Activated CD8-positive, alpha-beta memory T cell treated with anti-CD3 and anti-CD28 coated beads, Interleukin-2, amount 10 ng/mL, durations not matched to agents 7 days and 5 days (primary cell): ENCODE measurements at regions of chr20 and their contacts with region 1.

Region 1: DNA sequence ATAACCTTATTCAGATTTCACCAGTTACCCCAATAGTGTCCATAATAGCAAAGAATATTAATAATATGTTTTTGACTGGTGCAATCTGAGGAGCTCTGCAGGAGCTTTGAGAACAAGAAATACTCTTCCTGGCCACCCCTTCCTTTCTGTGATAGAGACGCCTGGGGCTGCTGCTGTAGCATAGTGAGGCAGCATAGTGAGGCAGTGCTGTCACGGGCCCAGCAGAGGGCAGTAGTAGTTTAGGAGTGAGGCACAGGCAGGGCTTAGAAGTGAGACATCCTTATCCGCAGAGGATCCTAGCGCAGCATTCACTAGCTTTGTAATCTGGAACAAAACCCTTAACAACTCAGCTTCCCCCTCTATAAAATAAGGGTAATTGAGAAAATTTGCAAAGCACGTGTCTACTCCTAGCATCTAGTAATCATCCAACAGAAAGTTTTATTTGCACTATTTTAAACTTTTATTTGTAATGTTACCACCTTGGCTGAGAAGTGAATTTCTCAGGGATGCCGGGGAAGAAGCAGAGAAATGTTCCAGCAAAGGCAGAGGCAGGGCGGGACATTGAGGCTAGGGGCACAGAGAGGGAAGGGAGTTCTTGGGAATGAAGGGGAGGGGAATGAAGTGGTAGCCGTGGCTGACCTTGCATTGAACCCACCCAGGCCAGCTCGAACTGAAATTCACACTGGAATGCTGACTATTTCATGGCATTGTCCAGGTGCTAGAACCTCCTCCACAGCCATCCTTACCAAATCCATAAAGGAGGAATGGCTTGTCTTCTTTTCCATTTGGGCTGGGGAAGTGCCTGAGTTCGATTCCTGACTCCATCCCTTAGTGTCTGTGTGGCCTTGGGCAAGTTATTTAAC is 78.8 kb downstream of the CDS2 start:
- DNase-seq: peak; percentile 81
- ATAC-seq: peak; percentile 97
- H3K4me3 Mint-ChIP-seq: no peak overlapping the region
- H3K27ac Mint-ChIP-seq: no peak overlapping the region
- H3K4me1 Mint-ChIP-seq: no peaks in the 10 kb centered on the region
- H3K27me3 Mint-ChIP-seq: no peaks in the 10 kb centered on the region

Region 2: GRCh38 chr20:5126512-5127203 is 78.9 kb before region 1 on chr20 and contains the start of gene CDS2:
- CTCF ChIA-PET with region 1: interaction called, 12 read pairs
- DNase-seq: peak; percentile 100
- ATAC-seq: peak; percentile 90
- H3K4me3 Mint-ChIP-seq: peak within 1 kb of the TSS; percentile 97
- H3K27ac Mint-ChIP-seq: peak within 1 kb of the TSS; percentile 96
- H3K4me1 Mint-ChIP-seq: peaks cover 54% of the 10 kb centered on the region
- H3K27me3 Mint-ChIP-seq: no peaks in the 10 kb centered on the region
- total RNA-seq, gene CDS2: 62.2 to 63.5 TPM

Region 3: GRCh38 chr20:5191829-5192569 is 13.6 kb before region 1 on chr20:
- CTCF ChIA-PET with region 1: interaction called, 20 read pairs
- DNase-seq: peak; percentile 55
- ATAC-seq: peak; percentile 75
- H3K4me3 Mint-ChIP-seq: no peak overlapping the region
- H3K27ac Mint-ChIP-seq: peak overlapping the region; percentile 64
- H3K4me1 Mint-ChIP-seq: peaks cover 20% of the 10 kb centered on the region
- H3K27me3 Mint-ChIP-seq: no peaks in the 10 kb centered on the region

Region 4: GRCh38 chr20:5215672-5216304 is 10.2 kb after region 1 on chr20:
- CTCF ChIA-PET with region 1: interaction called, 10 read pairs
- DNase-seq: no peak
- ATAC-seq: no peak
- H3K4me3 Mint-ChIP-seq: no peak overlapping the region
- H3K27ac Mint-ChIP-seq: no peak overlapping the region
- H3K4me1 Mint-ChIP-seq: no peaks in the 10 kb centered on the region
- H3K27me3 Mint-ChIP-seq: no peaks in the 10 kb centered on the region

Region 5: GRCh38 chr20:5222919-5223634 is 17.5 kb after region 1 on chr20:
- CTCF ChIA-PET with region 1: interaction called, 17 read pairs
- DNase-seq: peak; percentile 76
- ATAC-seq: peak; percentile 51
- H3K4me3 Mint-ChIP-seq: no peak overlapping the region
- H3K27ac Mint-ChIP-seq: no peak overlapping the region
- H3K4me1 Mint-ChIP-seq: no peaks in the 10 kb centered on the region
- H3K27me3 Mint-ChIP-seq: no peaks in the 10 kb centered on the region

Region 6: GRCh38 chr20:5448449-5449118 is 243.0 kb after region 1 on chr20:
- CTCF ChIA-PET with region 1: interaction called, 22 read pairs
- DNase-seq: peak; percentile 60
- ATAC-seq: peak; percentile 42
- H3K4me3 Mint-ChIP-seq: no peak overlapping the region
- H3K27ac Mint-ChIP-seq: no peak overlapping the region
- H3K4me1 Mint-ChIP-seq: no peaks in the 10 kb centered on the region
- H3K27me3 Mint-ChIP-seq: peaks cover 38% of the 10 kb centered on the region